ENCODE measurements at regions of chr11 and their contacts with region 1.

Region 1: GRCh38 chr11:114280696-114281095 is 15.5 kb upstream of the NNMT start:
- DNase-seq: peak; percentile 86
- H3K4me3 ChIP-seq: no peak overlapping the region
- H3K4me3 Mint-ChIP-seq: no peak overlapping the region
- H3K27ac Mint-ChIP-seq: no peak overlapping the region
- H3K4me1 ChIP-seq: peaks cover 22% of the 10 kb centered on the region; the same call in 1 of the 2 replicates
- H3K4me1 Mint-ChIP-seq: peaks cover 27% of the 10 kb centered on the region
- H3K27me3 ChIP-seq: no peaks in the 10 kb centered on the region; the same call in 1 of the 2 replicates
- H3K27me3 Mint-ChIP-seq: no peaks in the 10 kb centered on the region
- CTCF ChIP-seq: peak; percentile 94 to 95

Region 2: DNA sequence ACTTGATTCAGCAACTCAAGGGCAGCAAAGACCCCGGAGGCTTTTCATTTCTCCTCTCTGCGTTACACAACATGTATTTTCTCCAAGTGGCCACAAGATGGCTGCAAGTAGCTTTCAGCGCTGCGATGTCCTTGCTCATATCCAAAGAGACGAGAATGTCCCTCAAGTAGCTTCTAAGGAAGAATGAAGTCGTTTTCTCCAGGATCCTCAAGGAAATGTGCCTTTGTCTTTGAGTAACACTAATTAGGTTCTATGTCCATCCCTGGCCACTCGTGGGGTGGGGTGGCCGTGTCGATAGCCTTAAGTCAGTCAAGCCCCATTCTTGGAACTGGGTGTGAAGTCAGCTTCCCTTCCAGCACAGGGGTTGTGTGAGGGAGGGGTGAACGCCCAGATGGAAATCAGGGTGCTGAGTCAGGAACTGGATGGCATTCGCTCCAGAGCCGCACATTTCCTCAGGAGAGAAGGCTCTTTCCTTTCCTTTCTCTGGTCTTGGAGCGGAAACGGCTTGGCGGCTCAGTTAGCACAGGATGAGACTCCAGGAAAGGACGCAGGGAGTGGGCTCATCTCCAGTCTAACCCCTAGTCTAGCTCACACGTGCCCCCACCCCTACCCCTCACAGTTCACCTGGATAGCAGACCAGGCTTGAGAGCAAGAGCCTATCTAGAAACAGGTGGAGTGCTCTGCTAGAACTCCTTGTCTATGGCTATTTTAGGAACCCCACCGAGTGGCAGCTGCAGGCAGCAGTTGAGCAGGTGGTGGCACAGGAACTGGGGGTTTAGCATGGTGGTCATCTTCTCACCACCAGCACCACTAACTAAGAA is 59.8 kb after region 1 on chr11:
- CTCF ChIA-PET with region 1: interaction called, 12 read pairs
- POLR2A ChIA-PET with region 1: no interaction called
- intact Hi-C with region 1: loop called (anchors 1 kb)
- DNase-seq: peak; percentile 66 to 67
- H3K4me3 ChIP-seq: no peak overlapping the region
- H3K4me3 Mint-ChIP-seq: no peak overlapping the region
- H3K27ac Mint-ChIP-seq: no peak overlapping the region
- H3K4me1 ChIP-seq: 0 out of 2 replicates have a peak, but pooled peaks cover 8% of the 10 kb centered on the region
- H3K4me1 Mint-ChIP-seq: no peaks in the 10 kb centered on the region
- H3K27me3 ChIP-seq: no peaks in the 10 kb centered on the region
- H3K27me3 Mint-ChIP-seq: peaks cover 9% of the 10 kb centered on the region
- CTCF ChIP-seq: peak; percentile 97 to 98

Region 3: GRCh38 chr11:114400217-114400914 is 119.7 kb after region 1 on chr11 and contains the starts of genes C11orf71 and RBM7:
- CTCF ChIA-PET with region 1: no interaction called
- POLR2A ChIA-PET with region 1: no interaction called
- intact Hi-C with region 1: loop called (anchors 1 kb)
- DNase-seq: peak; percentile 100
- H3K4me3 ChIP-seq: peak within 1 kb of the TSS; percentile 51
- H3K4me3 Mint-ChIP-seq: peak within 1 kb of the TSS; percentile 91
- H3K27ac Mint-ChIP-seq: peak within 1 kb of the TSS; percentile 99
- H3K4me1 ChIP-seq: peaks cover 16% of the 10 kb centered on the region
- H3K4me1 Mint-ChIP-seq: peaks cover 36% of the 10 kb centered on the region
- H3K27me3 ChIP-seq: no peaks in the 10 kb centered on the region
- H3K27me3 Mint-ChIP-seq: no peaks in the 10 kb centered on the region
- CTCF ChIP-seq: peak in 1 of 2 experiments; percentile 33
- total RNA-seq, gene C11orf71: 9.5 and 9.8 TPM in 2 replicates
- total RNA-seq, gene RBM7: 57.6 and 62.6 TPM in 2 replicates

Region 4: GRCh38 chr11:114478768-114479167 is 198.1 kb after region 1 on chr11:
- CTCF ChIA-PET with region 1: no interaction called
- POLR2A ChIA-PET with region 1: no interaction called
- intact Hi-C with region 1: no loop called
- DNase-seq: no peak
- H3K4me3 ChIP-seq: no peak overlapping the region
- H3K4me3 Mint-ChIP-seq: no peak overlapping the region
- H3K27ac Mint-ChIP-seq: no peak overlapping the region
- H3K4me1 ChIP-seq: 0 out of 2 replicates have a peak, but pooled peaks cover 7% of the 10 kb centered on the region
- H3K4me1 Mint-ChIP-seq: no peaks in the 10 kb centered on the region
- H3K27me3 ChIP-seq: no peaks in the 10 kb centered on the region
- H3K27me3 Mint-ChIP-seq: peaks cover 3% of the 10 kb centered on the region
- CTCF ChIP-seq: peak in 1 of 2 experiments; percentile 2

Region 5: GRCh38 chr11:114586797-114587196 is 306.1 kb after region 1 on chr11:
- CTCF ChIA-PET with region 1: no interaction called
- POLR2A ChIA-PET with region 1: no interaction called
- intact Hi-C with region 1: loop called (anchors 1 kb)
- DNase-seq: no peak
- H3K4me3 ChIP-seq: no peak overlapping the region
- H3K4me3 Mint-ChIP-seq: no peak overlapping the region
- H3K27ac Mint-ChIP-seq: no peak overlapping the region
- H3K4me1 ChIP-seq: no peaks in the 10 kb centered on the region
- H3K4me1 Mint-ChIP-seq: no peaks in the 10 kb centered on the region
- H3K27me3 ChIP-seq: no peaks in the 10 kb centered on the region
- H3K27me3 Mint-ChIP-seq: no peaks in the 10 kb centered on the region
- CTCF ChIP-seq: peak; percentile 27

Region 6: DNA sequence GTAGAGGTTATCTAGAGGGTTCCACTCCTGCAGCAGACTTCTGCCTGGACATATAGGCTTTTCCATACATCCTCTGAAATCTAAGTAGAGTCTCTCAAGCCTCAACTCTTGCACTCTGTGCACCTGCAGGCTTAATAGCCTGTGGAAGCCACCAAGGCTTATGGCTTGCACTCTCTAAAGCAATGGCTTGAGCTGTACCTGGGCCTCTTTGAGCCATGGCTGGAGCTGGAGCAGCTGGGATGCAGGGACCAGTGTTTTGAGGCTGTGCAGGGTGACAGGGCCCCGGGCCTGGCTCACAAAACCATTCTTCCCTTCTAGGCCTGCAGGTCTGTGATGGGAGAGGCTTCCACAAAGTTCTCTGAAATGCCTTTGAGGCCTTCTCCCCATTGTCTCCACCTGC is 317.8 kb after region 1 on chr11:
- CTCF ChIA-PET with region 1: no interaction called
- POLR2A ChIA-PET with region 1: no interaction called
- intact Hi-C with region 1: no loop called
- DNase-seq: no peak
- H3K4me3 ChIP-seq: no peak overlapping the region
- H3K4me3 Mint-ChIP-seq: no peak overlapping the region
- H3K27ac Mint-ChIP-seq: no peak overlapping the region
- H3K4me1 ChIP-seq: no peaks in the 10 kb centered on the region
- H3K4me1 Mint-ChIP-seq: no peaks in the 10 kb centered on the region
- H3K27me3 ChIP-seq: no peaks in the 10 kb centered on the region
- H3K27me3 Mint-ChIP-seq: no peaks in the 10 kb centered on the region
- CTCF ChIP-seq: no peak

Measured in Caco-2 (cell line).